AG04450 (cell line): ENCODE measurements at regions of chr4 and their contacts with region 1.

Region 1: GRCh38 chr4:147689067-147689466 is 5.1 kb upstream of the PRMT9 start:
- DNase-seq: no peak
- H3K4me3 ChIP-seq: no peak overlapping the region
- H3K27ac ChIP-seq: no peak overlapping the region
- H3K27me3 ChIP-seq: peaks cover 4% of the 10 kb centered on the region
- CTCF ChIP-seq: no peak

Region 2: GRCh38 chr4:147678796-147679549 is 10.1 kb before region 1 on chr4:
- CTCF ChIA-PET with region 1: no interaction called
- POLR2A ChIA-PET with region 1: no interaction called
- DNase-seq: no peak
- H3K4me3 ChIP-seq: no peak overlapping the region
- H3K27ac ChIP-seq: no peak overlapping the region
- H3K27me3 ChIP-seq: no peaks in the 10 kb centered on the region
- CTCF ChIP-seq: no peak

Region 3: GRCh38 chr4:148052448-148052847 is 363.4 kb after region 1 on chr4:
- CTCF ChIA-PET with region 1: interaction called, 10 read pairs
- POLR2A ChIA-PET with region 1: no interaction called
- DNase-seq: no peak
- H3K4me3 ChIP-seq: no peak overlapping the region
- H3K27ac ChIP-seq: no peak overlapping the region
- H3K27me3 ChIP-seq: no peaks in the 10 kb centered on the region
- CTCF ChIP-seq: peak; percentile 5; the same call in 1 of the 2 replicates